Right ventricle myocardium inferior (tissue), 1 donor: ENCODE measurements at regions of chr1 and their contacts with region 1.

Region 1: DNA sequence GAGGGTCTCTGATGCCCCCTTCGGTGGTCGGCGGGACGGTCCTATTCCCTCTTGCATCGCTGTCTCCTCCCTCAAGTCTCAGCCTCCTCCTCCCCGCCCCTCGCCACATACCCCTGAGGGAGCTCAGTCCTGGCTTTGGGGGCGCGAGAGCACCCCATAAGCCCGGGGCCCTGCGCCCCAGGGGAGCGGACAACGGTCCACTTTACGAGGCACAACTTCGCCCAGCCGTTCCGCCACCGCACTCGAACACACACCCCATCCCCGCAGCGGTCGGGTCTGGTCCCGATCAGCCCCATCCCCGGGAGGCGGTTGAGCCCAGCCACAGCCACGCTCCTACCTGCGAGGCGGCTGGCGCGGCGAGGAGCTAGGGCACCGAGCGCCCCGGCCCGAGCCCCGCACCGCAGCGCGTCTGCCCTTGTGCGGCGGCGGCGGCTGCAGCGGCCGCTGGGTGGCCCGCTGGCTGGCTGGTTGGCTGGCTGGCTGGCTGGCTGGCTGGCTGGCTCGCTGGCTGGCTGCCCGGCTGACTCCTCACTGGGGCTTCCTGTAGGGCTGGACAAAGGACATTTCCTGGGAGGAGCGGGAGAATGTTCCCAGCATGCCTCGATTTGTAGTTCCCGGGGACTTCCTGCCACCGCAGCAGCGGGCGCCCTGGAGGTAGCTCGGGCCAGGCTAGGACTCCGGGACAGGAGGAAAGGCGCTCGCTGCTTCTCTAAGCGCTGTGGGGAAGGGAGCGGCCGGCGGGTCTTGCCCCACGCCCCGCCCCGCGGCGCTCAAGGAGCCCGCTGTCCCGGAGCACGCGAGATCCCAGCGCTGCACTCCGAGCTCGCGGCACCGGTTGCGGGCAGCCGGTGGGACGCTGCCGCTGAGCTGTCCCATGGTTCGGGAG is at the start of gene ZNF697:
- DNase-seq: peak; percentile 98
- ATAC-seq: peak; percentile 97
- total RNA-seq, gene ZNF697: 8.8 TPM

Region 2: GRCh38 chr1:119613769-119614720 is 33.9 kb before region 1 on chr1:
- intact Hi-C with region 1: loop called (anchors 5 kb)
- DNase-seq: peak; percentile 86
- ATAC-seq: peak; percentile 94

Region 3: GRCh38 chr1:119621705-119622104 is 26.3 kb before region 1 on chr1:
- intact Hi-C with region 1: loop called (anchors 2 kb)
- DNase-seq: no peak
- ATAC-seq: no peak

Region 4: DNA sequence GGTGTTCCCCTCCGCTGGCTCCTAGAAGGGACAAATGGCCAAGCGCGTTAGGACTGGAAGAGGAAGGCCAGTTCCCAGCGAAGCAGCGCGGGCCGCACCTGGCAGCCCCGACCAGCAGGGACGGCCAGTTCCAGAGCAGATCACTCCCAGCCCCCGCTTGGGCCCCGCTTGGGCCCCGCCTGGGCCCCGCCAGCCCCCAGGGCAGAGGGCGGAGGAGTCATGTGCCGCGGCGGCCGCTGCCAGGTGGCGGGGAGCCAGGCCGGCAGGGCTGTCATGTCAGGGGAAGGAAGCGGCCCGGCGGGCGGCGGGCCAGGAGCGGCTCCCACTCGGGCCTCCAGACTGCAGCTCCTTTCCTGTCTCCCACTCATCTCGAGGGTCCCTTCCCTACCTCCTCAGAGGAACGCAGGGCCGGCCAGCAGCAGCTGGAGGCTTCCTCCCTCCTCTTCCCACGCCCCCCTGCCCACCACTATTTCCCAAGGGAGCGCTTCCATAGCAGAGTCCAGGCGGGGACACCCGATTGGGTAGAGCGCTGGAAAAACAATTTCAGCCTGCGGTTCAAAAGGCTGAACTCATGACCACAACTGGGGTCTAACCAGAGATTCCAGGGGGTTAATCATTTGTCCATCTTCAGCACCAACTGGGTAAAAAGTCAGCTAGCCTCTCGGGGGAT is 16.4 kb before region 1 on chr1:
- intact Hi-C with region 1: loop called (anchors 1 kb)
- DNase-seq: peak; percentile 95
- ATAC-seq: peak; percentile 95